ENCODE measurements at regions of chr20 and their contacts with region 1.

Region 1: DNA sequence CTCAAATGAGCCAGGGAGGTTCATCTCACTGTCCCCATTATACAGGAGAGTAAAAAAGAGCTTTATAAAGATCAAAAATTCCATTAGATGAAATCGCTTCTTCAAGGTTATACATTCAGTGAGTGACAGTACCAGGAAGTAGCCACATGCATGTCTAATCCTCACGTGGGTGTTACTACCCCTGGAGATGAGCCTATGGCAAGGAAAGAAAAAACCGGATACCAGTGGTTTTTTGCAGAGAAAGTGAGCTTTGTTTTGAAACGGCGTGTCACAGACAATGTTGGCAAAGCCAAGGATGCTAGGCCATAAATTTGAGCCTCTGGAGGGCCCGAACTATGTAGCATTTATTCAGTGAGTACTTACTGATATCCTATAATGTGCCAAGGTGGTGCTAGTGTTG is 215.0 kb upstream of the RIN2 start:
- DNase-seq: no peak
- ATAC-seq: no peak
- H3K4me3 ChIP-seq: no peak overlapping the region
- H3K27ac ChIP-seq: no peak overlapping the region
- H3K4me1 ChIP-seq: no peaks in the 10 kb centered on the region
- H3K27me3 ChIP-seq: peaks cover 0 to 19% of the 10 kb centered on the region in 2 experiments; a peak in 2 of 5 replicates
- CTCF ChIP-seq: no peak
- EP300 ChIP-seq: no peak
- POLR2A ChIP-seq: no peak
- RAD21 ChIP-seq: no peak

Region 2: GRCh38 chr20:19308146-19308545 is 235.0 kb before region 1 on chr20:
- CTCF ChIA-PET with region 1: no interaction called
- POLR2A ChIA-PET with region 1: no interaction called
- in situ Hi-C with region 1: no loop called
- intact Hi-C with region 1: no loop called
- DNase-seq: no peak
- ATAC-seq: no peak
- H3K4me3 ChIP-seq: no peak overlapping the region
- H3K27ac ChIP-seq: no peak overlapping the region
- H3K4me1 ChIP-seq: no peaks in the 10 kb centered on the region
- H3K27me3 ChIP-seq: no peaks in the 10 kb centered on the region
- CTCF ChIP-seq: no peak
- EP300 ChIP-seq: no peak
- POLR2A ChIP-seq: no peak
- RAD21 ChIP-seq: no peak

Region 3: GRCh38 chr20:19566226-19566965 is 23.3 kb after region 1 on chr20:
- CTCF ChIA-PET with region 1: no interaction called
- POLR2A ChIA-PET with region 1: no interaction called
- in situ Hi-C with region 1: no loop called
- intact Hi-C with region 1: loop called (anchors 1 kb)
- DNase-seq: no peak
- ATAC-seq: no peak
- H3K4me3 ChIP-seq: no peak overlapping the region
- H3K27ac ChIP-seq: no peak overlapping the region
- H3K4me1 ChIP-seq: no peaks in the 10 kb centered on the region
- H3K27me3 ChIP-seq: peaks cover 0 to 4% of the 10 kb centered on the region in 2 experiments; a peak in 1 of 5 replicates
- CTCF ChIP-seq: no peak
- EP300 ChIP-seq: no peak
- POLR2A ChIP-seq: no peak
- RAD21 ChIP-seq: no peak